ENCODE measurements at regions of chr1 and their contacts with region 1.

Region 1: GRCh38 chr1:176559878-176560277 is 96.9 kb downstream of the PAPPA2 start:
- DNase-seq: peak; percentile 32
- ATAC-seq: no peak
- H3K4me3 Mint-ChIP-seq: no peak overlapping the region
- H3K27ac Mint-ChIP-seq: no peak overlapping the region
- H3K4me1 Mint-ChIP-seq: no peaks in the 10 kb centered on the region
- H3K27me3 Mint-ChIP-seq: peaks cover 5% of the 10 kb centered on the region
- CTCF ChIP-seq: peak; percentile 91

Region 2: DNA sequence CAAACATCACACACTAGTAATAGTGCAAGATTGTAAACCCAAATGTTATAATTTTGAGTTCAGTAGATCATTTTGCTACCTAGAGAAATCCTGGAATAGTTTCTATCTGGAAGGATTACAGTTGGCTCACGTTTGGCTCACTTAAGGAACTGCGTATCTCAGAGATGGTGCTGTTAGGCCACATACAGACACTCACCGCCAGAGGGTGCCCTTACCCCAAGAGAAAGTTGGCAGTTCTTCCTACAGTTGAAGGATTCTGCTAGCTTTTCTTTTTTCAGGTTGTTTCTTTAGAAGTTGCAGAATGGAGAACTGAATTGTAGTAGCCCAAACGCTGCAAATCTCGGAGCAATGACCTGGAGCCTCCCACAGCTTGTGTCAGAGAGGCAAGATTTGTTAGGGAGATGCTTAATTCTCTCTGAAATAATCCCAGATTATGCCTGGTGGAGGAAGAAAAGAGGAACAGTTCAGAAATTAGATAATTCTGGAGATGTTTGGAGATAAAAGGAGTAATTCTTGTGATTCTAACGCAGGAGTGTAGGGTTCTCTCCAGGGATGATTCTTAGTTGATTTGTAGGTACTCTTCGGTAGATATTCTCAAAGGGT is 184.8 kb before region 1 on chr1:
- CTCF ChIA-PET with region 1: interaction called, 4 read pairs
- POLR2A ChIA-PET with region 1: no interaction called
- intact Hi-C with region 1: loop called (anchors 10 kb)
- DNase-seq: peak; percentile 81
- ATAC-seq: peak; percentile 56
- H3K4me3 Mint-ChIP-seq: no peak overlapping the region
- H3K27ac Mint-ChIP-seq: no peak overlapping the region
- H3K4me1 Mint-ChIP-seq: no peaks in the 10 kb centered on the region
- H3K27me3 Mint-ChIP-seq: peaks cover 14% of the 10 kb centered on the region
- CTCF ChIP-seq: peak; percentile 73

Region 3: DNA sequence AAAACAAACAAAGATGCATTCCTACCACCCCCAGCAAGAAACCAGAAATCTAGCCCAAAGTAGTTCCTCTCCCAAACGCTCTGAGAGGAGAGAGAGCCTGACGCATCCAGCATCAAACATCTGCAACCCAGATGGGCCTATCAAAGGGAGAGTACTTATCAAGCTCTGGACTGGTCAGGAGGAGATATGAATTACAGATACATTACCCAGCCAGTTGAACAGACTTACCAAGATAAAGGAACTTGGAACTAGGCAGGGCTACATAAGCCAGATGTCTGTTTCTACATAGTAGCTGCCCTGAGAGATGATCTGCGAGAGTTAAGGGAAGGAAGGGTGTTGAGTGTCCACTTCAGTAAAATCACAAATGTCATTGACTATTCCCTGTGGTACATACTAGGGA is 41.5 kb after region 1 on chr1:
- CTCF ChIA-PET with region 1: no interaction called
- POLR2A ChIA-PET with region 1: no interaction called
- intact Hi-C with region 1: no loop called
- DNase-seq: no peak
- ATAC-seq: no peak
- H3K4me3 Mint-ChIP-seq: no peak overlapping the region
- H3K27ac Mint-ChIP-seq: no peak overlapping the region
- H3K4me1 Mint-ChIP-seq: no peaks in the 10 kb centered on the region
- H3K27me3 Mint-ChIP-seq: no peaks in the 10 kb centered on the region
- CTCF ChIP-seq: no peak

Region 4: DNA sequence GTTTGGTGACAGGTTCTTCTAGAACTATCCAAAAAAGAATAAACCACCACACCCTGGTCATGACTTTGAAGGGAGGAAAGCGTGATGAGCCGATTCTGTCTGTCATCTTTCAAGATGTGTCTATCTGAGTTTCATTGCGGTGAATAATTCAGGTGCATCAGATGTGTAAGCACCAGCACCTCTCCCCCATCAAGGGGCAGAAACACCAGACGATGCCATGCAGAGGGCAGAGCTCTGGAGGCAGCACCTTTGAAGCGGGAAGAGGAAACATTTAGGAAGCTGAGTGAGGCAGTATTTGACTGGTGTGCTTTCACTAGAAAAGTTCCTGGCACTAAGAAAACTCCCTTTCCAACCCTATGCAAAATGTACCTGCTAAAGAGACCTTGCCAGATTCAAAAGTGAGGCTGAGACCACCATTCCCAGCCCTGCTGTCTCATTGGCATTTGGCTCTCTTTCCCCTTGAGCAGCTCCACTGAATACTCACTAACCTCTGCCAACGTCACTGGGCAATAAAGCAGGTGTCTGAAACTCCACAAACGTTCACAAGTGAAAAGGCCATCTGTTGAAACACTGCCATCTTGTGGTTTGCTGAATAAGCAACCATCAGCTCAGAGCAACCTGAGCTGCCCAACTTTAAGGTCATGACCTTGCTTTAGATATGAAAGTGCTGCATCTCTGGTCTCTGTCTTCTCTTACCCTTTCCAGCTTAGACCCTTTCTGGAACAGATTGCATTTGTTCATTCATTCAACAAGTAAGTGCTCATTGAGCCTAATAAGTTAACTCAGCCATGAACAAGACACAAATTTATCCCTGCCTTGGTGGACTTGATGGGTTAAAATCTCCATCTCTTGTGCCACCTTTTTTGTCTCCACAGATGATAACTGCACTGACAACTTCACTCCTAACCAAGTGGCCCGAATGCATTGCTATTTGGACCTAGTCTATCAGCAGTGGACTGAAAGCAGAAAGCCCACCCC is 131.7 kb after region 1 on chr1:
- CTCF ChIA-PET with region 1: interaction called, 15 read pairs
- POLR2A ChIA-PET with region 1: no interaction called
- intact Hi-C with region 1: loop called (anchors 5 kb)
- DNase-seq: peak; percentile 17
- ATAC-seq: no peak
- H3K4me3 Mint-ChIP-seq: no peak overlapping the region
- H3K27ac Mint-ChIP-seq: no peak overlapping the region
- H3K4me1 Mint-ChIP-seq: no peaks in the 10 kb centered on the region
- H3K27me3 Mint-ChIP-seq: no peaks in the 10 kb centered on the region
- CTCF ChIP-seq: peak; percentile 49

Region 5: GRCh38 chr1:176880954-176881595 is 321.2 kb after region 1 on chr1:
- CTCF ChIA-PET with region 1: interaction called, 8 read pairs
- POLR2A ChIA-PET with region 1: no interaction called
- intact Hi-C with region 1: loop called (anchors 2 kb)
- DNase-seq: peak; percentile 66
- ATAC-seq: no peak
- H3K4me3 Mint-ChIP-seq: no peak overlapping the region
- H3K27ac Mint-ChIP-seq: no peak overlapping the region
- H3K4me1 Mint-ChIP-seq: no peaks in the 10 kb centered on the region
- H3K27me3 Mint-ChIP-seq: peaks cover 3% of the 10 kb centered on the region
- CTCF ChIP-seq: peak; percentile 72